Heart right ventricle (tissue), 16 donors: ENCODE measurements at regions of chr21 and their contacts with region 1.

Region 1: DNA sequence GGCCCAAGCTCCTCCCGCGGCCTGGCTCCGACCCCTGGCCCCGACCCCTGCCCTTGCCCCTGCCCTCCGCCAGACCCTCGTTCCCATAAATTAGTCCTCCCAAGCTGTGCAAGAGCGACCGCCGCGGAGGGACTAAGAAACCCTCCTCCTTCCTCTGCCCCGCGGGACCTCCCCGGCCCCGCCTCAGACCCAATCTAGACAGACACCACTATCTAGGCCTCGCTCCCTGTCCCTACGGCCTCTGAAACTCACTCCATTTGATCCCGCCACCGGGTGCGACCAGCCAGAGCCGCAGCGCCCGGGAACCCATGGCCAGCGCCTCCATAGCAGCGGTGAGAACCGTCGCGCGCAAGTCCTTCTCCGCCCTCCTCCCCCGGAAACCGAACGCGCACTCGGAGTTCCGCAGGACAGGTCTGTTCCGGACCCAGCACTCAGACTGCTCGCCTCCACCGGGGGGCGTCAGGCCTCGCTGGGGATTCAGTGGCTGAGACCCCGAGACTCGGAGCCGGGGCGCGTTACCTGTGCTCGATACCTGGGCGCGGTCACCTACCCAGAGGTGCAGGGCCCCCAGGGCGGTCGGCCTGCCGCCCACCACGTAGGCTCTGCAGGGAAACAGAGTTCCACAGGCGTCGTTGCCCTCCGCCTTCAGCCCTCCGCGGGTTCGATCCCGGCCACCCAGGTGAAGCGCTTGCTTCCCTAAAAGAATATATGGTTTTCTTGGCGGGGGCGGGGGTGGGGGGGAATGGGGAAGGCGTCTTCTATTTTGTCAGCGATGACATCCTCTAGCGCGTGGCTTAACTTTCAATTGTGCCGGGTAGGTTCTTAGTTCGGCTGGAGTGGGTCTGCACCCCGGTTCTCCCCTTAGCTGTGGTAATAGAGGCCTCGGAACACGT is at the start of gene MRPL39:
- DNase-seq: peak; percentile 86 to 87
- ATAC-seq: peak; percentile 96 to 99 (median 98)
- H3K4me3 ChIP-seq: peak within 1 kb of the TSS; percentile 45 to 91 (median 82)
- H3K27ac ChIP-seq: peak within 1 kb of the TSS; percentile 53 to 92 (median 83)
- H3K4me1 ChIP-seq: peaks cover 0 to 36% (median 25%) of the 10 kb centered on the region in 9 donors
- H3K27me3 ChIP-seq: no peaks in the 10 kb centered on the region
- CTCF ChIP-seq: peak in 8 of 9 donors; percentile 35 to 75 (median 56)
- total RNA-seq, gene MRPL39: 39.3 to 59.1 (median 51.3) TPM

Region 2: GRCh38 chr21:25639551-25640201 is 32.3 kb after region 1 on chr21:
- intact Hi-C with region 1: loop called in 4 of 10 experiments (anchors 1 to 2 kb)
- DNase-seq: peak; percentile 58 to 59
- ATAC-seq: peak; percentile 78 to 92 (median 84)
- H3K4me3 ChIP-seq: peak overlapping the region; percentile 61 to 93 (median 79)
- H3K27ac ChIP-seq: peak overlapping the region; percentile 77 to 98 (median 90)
- H3K4me1 ChIP-seq: peaks cover 0 to 47% (median 22%) of the 10 kb centered on the region in 9 donors
- H3K27me3 ChIP-seq: peaks cover 0 to 32% (median 0%) of the 10 kb centered on the region in 7 donors
- CTCF ChIP-seq: peak in 8 of 9 donors; percentile 20 to 66 (median 48)

Region 3: DNA sequence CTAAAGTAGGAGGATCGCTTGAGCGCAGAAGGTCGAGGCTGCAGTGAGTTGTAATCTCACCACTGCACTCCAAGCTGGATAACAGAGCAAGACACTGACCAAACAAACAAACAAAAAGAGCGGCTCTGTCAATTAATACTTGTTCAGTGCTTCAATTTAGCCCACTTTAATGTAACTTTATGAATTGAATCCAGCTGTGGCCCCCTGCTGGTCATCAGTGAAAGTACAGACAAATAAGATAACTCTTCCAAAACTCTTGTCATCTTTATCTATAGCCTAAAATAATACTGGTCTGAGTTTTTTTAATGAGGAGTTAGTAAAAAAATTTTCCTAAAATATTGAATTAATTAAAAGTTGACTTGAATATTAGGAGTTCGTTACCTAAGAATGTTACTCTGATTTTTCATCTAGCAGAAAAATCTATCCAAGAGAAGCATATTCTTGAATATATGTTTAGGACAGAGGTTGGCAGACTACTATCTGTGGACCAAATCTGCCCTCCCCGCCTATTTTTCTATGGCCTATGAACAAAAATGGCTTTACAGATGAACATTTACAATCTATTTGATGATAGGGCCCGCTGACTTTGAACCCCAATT is 101.2 kb after region 1 on chr21:
- intact Hi-C with region 1: loop called (anchors 1 to 5 kb)
- DNase-seq: peak in 1 of 2 donors; percentile 43
- ATAC-seq: peak in 1 of 8 donors; percentile 26
- H3K4me3 ChIP-seq: no peak overlapping the region
- H3K27ac ChIP-seq: no peak overlapping the region
- H3K4me1 ChIP-seq: peaks cover 0 to 32% (median 8%) of the 10 kb centered on the region in 9 donors
- H3K27me3 ChIP-seq: no peaks in the 10 kb centered on the region
- CTCF ChIP-seq: peak; percentile 79 to 93 (median 85)

Region 4: DNA sequence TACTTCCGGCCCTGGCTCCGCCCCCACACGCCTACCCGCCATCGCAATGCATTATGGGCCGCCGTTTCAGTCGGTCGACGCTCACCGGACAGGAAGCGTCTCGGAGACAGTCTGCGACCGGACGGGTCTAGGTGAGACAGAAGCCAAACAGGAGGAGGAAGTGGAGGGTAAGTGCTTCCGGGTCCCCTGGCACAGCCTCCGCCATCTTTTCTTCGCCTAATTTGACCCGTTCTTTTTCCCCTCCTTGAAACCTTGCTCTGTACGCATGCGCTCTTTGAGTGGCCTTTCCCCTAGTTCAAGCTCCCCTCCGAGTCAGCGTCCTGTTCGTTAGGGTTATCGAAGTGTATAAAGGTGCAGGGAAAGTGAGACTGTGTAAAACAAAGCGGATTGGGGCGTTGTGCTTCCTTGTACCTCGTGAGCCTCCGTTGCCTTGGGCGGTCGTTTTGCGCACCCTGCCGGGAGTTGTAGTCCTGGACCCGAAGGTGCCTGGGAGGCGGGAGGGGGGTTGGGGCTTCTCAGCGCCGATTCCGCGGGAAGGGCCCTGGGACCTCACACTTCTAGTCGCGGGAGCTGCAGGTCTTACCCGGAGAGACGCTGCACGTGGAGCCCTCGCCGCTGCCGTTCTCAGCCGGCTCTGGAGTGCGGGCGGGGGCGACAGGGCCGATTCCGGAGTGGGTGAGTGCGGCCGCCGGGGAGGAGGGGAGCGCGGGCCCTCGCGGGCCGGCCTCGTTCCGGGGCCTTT is 127.7 kb after region 1 on chr21 and contains the starts of genes ATP5PF and GABPA:
- intact Hi-C with region 1: loop called in 1 of 10 experiments (anchors 10 kb)
- DNase-seq: peak; percentile 97
- ATAC-seq: peak; percentile 93 to 97 (median 96)
- H3K4me3 ChIP-seq: peak within 1 kb of the TSS; percentile 74 to 98 (median 92)
- H3K27ac ChIP-seq: peak within 1 kb of the TSS; percentile 97 to 100 (median 99)
- H3K4me1 ChIP-seq: peaks cover 8 to 69% (median 49%) of the 10 kb centered on the region in 9 donors
- H3K27me3 ChIP-seq: no peaks in the 10 kb centered on the region
- CTCF ChIP-seq: peak in 5 of 9 donors; percentile 7 to 43 (median 18)
- total RNA-seq, gene ATP5PF: 537 to 965 (median 854) TPM
- total RNA-seq, gene GABPA: 11.0 to 18.4 (median 14.1) TPM

Region 5: DNA sequence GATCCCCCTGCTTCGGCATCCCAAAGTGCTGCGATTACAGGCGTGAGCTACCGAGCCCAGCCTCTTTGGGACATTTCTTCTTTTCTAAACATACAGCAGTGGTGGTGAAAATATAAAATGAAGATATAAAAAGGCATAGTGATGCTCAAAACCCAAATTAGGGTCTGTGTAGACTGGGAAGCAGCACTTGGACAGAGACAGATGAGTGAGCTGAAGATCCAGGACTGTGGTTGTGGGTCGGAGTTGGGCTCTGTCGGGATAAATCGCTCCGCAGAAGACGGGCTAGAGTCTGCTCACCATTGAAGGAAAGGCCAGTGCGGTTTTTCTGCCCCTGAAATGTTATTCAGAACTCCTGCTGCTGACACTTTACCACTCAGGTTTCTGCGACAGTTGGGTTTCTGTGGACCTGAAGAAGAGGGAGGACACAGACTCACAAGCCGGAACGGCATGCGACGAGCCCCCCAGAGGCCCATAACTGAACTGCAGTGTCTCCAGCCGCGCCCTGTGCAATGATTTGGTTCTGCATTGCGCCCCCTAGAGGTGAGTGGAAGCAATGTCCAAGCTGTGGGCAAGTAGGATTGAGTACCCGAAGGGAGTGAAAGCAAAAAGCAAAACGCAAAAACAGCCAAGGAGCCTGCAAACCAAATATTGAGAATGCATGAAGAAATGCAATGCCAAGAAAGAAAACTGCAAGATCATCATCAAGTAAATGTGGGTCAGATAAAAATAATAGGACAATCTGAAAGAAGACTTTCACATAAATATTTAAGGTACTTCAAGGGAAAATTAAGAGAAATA is 194.0 kb after region 1 on chr21:
- intact Hi-C with region 1: loop called in 6 of 10 experiments (anchors 1 to 10 kb)
- DNase-seq: peak; percentile 80 to 88
- ATAC-seq: peak; percentile 88 to 98 (median 94)
- H3K4me3 ChIP-seq: no peak overlapping the region
- H3K27ac ChIP-seq: no peak overlapping the region
- H3K4me1 ChIP-seq: peaks cover 0 to 8% (median 0%) of the 10 kb centered on the region in 9 donors
- H3K27me3 ChIP-seq: peaks cover 0 to under 1% (median 0%) of the 10 kb centered on the region in 7 donors
- CTCF ChIP-seq: peak; percentile 91 to 99 (median 97)

Region 6: GRCh38 chr21:25881525-25882376 is 274.4 kb after region 1 on chr21:
- intact Hi-C with region 1: loop called in 1 of 10 experiments (anchors 10 kb)
- DNase-seq: peak; percentile 63 to 65
- ATAC-seq: peak; percentile 63 to 85 (median 72)
- H3K4me3 ChIP-seq: no peak overlapping the region
- H3K27ac ChIP-seq: no peak overlapping the region
- H3K4me1 ChIP-seq: peaks cover 0 to 17% (median 8%) of the 10 kb centered on the region in 9 donors
- H3K27me3 ChIP-seq: no peaks in the 10 kb centered on the region
- CTCF ChIP-seq: peak; percentile 88 to 98 (median 96)